K562 (cell line): ENCODE measurements at regions of chr19 and their contacts with region 1.

Region 1: GRCh38 chr19:49502866-49503581 is 6.8 kb downstream of the RPS11 start:
- DNase-seq: peak in 3 of 4 experiments; percentile 24 to 81 (median 56)
- ATAC-seq: peak; percentile 73
- H3K4me3 ChIP-seq: no peak overlapping the region
- H3K27ac ChIP-seq: no peak overlapping the region
- H3K4me1 ChIP-seq: peaks cover 29 to 36% of the 10 kb centered on the region in 2 experiments; a peak in 4 of 5 replicates
- H3K27me3 ChIP-seq: no peaks in the 10 kb centered on the region
- CTCF ChIP-seq: peak; percentile 70 to 73 (median 71)
- EP300 ChIP-seq: no peak
- POLR2A ChIP-seq: no peak
- RAD21 ChIP-seq: peak; percentile 77 to 83

Region 2: GRCh38 chr19:49473868-49474544 is 29.0 kb before region 1 on chr19 and contains the start of gene FLT3LG:
- CTCF ChIA-PET with region 1: interaction called, 3 read pairs
- POLR2A ChIA-PET with region 1: no interaction called
- in situ Hi-C with region 1: no loop called
- intact Hi-C with region 1: loop called (anchors 1 kb)
- DNase-seq: peak; percentile 87 to 91 (median 88)
- ATAC-seq: peak; percentile 76
- H3K4me3 ChIP-seq: peak within 1 kb of the TSS; percentile 56
- H3K27ac ChIP-seq: peak within 1 kb of the TSS; percentile 29; the same call in 2 of the 3 replicates
- H3K4me1 ChIP-seq: peaks cover 14 to 52% of the 10 kb centered on the region in 2 experiments
- H3K27me3 ChIP-seq: no peaks in the 10 kb centered on the region
- CTCF ChIP-seq: peak; percentile 94 to 97 (median 96)
- EP300 ChIP-seq: no peak
- POLR2A ChIP-seq: no peak; the same call in 1 of the 2 replicates
- RAD21 ChIP-seq: peak; percentile 62 to 71
- polyA plus RNA-seq, gene FLT3LG: 0.31 to 0.49 TPM

Region 3: GRCh38 chr19:49492573-49493405 is 10.2 kb before region 1 on chr19:
- CTCF ChIA-PET with region 1: no interaction called
- POLR2A ChIA-PET with region 1: no interaction called
- in situ Hi-C with region 1: no loop called
- intact Hi-C with region 1: no loop called
- DNase-seq: peak in 3 of 4 experiments; percentile 4 to 73 (median 26)
- ATAC-seq: peak; percentile 21
- H3K4me3 ChIP-seq: no peak overlapping the region
- H3K27ac ChIP-seq: peak overlapping the region; percentile 42
- H3K4me1 ChIP-seq: peaks cover 19 to 26% of the 10 kb centered on the region in 2 experiments; a peak in 4 of 5 replicates
- H3K27me3 ChIP-seq: no peaks in the 10 kb centered on the region
- CTCF ChIP-seq: no peak
- EP300 ChIP-seq: no peak
- POLR2A ChIP-seq: peak; percentile 97
- RAD21 ChIP-seq: 0 out of 4 replicates have a peak, but pooled peaks of 1 of the 2 experiments have one; percentile 5

Region 4: DNA sequence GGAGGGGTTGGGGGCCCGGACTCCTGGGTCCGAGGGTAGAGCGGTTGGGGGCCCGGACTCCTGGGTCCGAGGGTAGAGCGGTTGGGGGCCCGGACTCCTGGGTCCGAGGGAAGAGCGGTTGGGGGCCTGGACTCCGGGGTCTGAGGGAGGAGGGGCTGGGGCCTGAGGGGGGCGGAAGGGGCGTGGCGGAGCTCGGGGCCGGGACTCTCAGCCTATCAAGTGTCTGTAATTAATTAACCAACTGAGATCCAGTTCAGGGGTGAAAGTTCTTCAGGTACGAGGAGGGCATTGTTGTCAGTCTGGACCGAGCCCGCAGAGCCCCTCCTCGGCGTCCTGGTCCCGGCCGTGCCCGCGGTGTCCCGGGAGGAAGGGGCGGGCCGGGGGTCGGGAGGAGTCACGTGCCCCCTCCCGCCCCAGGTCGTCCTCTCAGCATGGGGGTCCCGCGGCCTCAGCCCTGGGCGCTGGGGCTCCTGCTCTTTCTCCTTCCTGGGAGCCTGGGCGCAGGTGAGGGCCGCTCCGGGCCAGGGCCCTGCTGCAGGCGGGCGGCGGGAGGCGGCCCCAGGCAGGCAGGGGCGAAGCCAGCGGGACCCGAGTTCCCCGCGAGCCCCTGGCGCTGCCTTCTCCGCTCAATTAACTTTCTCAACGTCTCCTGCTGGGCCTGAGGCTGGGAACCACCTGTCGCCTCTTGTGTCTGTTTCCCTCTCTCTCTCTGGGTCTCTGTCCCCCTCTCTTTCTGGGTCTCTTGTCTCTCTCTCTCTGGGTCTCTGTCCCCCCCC is 10.1 kb after region 1 on chr19:
- CTCF ChIA-PET with region 1: no interaction called
- POLR2A ChIA-PET with region 1: no interaction called
- in situ Hi-C with region 1: no loop called
- intact Hi-C with region 1: no loop called
- DNase-seq: peak in 2 of 4 experiments; percentile 72 to 77
- ATAC-seq: peak; percentile 62
- H3K4me3 ChIP-seq: peak overlapping the region; percentile 31
- H3K27ac ChIP-seq: no peak overlapping the region; the same call in 2 of the 3 replicates
- H3K4me1 ChIP-seq: peaks cover 7 to 35% of the 10 kb centered on the region in 2 experiments; a peak in 4 of 5 replicates
- H3K27me3 ChIP-seq: no peaks in the 10 kb centered on the region
- CTCF ChIP-seq: no peak
- EP300 ChIP-seq: no peak
- POLR2A ChIP-seq: no peak
- RAD21 ChIP-seq: no peak

Region 5: DNA sequence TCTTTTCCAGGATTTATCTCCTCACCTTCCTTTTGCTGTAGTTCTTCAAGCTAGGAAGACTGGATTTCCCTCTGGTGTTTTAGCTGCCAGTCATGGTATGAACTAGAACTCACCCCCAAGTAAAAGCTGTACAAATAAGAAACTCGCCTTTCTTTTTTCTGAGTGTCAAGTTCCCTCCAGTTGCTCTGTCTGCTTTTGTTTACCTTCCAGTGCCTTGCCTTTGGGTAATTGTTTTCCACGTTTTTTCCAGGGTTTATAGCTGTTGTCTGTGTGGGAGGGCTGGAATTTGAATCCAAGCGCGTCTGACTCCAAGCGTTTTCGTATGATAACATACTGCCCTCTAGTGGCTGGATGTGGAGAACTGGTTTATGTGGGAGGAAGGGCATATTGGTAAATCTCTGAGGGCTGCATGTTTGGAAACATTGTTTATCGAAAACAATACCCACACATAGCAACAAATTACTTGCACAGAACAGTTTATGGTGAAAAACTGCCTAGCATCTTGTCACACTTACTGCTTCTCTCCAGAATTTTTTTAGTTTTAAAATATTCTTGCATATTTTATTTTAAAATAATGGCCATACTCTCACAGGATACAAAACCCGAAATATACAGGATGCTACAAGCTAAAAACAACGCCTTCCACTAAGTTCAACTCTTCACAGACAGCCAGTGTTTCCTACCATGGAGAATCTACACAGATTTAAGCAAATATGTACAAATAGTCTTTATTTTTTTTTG is 44.0 kb after region 1 on chr19:
- CTCF ChIA-PET with region 1: interaction called, 16 read pairs
- POLR2A ChIA-PET with region 1: interaction called, 3 read pairs
- in situ Hi-C with region 1: loop called (anchors 5 kb)
- intact Hi-C with region 1: loop called (anchors 1 kb)
- DNase-seq: peak; percentile 74 to 89 (median 76)
- ATAC-seq: peak; percentile 88
- H3K4me3 ChIP-seq: no peak overlapping the region
- H3K27ac ChIP-seq: no peak overlapping the region
- H3K4me1 ChIP-seq: peaks cover 2 to 22% of the 10 kb centered on the region in 2 experiments; a peak in 3 of 5 replicates
- H3K27me3 ChIP-seq: no peaks in the 10 kb centered on the region
- CTCF ChIP-seq: peak; percentile 84 to 91 (median 85)
- EP300 ChIP-seq: no peak
- POLR2A ChIP-seq: no peak
- RAD21 ChIP-seq: peak; percentile 87 to 90

Region 6: GRCh38 chr19:49570138-49570856 is 67.3 kb after region 1 on chr19:
- CTCF ChIA-PET with region 1: no interaction called
- POLR2A ChIA-PET with region 1: interaction called, 7 read pairs
- in situ Hi-C with region 1: loop called (anchors 5 kb)
- intact Hi-C with region 1: loop called (anchors 1 kb)
- DNase-seq: peak; percentile 81 to 93 (median 82)
- ATAC-seq: peak; percentile 89
- H3K4me3 ChIP-seq: no peak overlapping the region
- H3K27ac ChIP-seq: peak overlapping the region; percentile 53
- H3K4me1 ChIP-seq: peaks cover 17 to 21% of the 10 kb centered on the region in 2 experiments
- H3K27me3 ChIP-seq: no peaks in the 10 kb centered on the region
- CTCF ChIP-seq: peak; percentile 98 to 100 (median 99)
- EP300 ChIP-seq: no peak
- POLR2A ChIP-seq: no peak
- RAD21 ChIP-seq: peak; percentile 89 to 90

Region 7: GRCh38 chr19:49712397-49712859 is 209.4 kb after region 1 on chr19:
- CTCF ChIA-PET with region 1: no interaction called
- POLR2A ChIA-PET with region 1: no interaction called
- in situ Hi-C with region 1: no loop called
- intact Hi-C with region 1: no loop called
- DNase-seq: peak; percentile 95 to 97 (median 96)
- ATAC-seq: peak; percentile 91
- H3K4me3 ChIP-seq: peak overlapping the region; percentile 34
- H3K27ac ChIP-seq: peak overlapping the region; percentile 50; the same call in 2 of the 3 replicates
- H3K4me1 ChIP-seq: peaks cover 19 to 33% of the 10 kb centered on the region in 2 experiments; a peak in 4 of 5 replicates
- H3K27me3 ChIP-seq: no peaks in the 10 kb centered on the region
- CTCF ChIP-seq: no peak
- EP300 ChIP-seq: peak; percentile 7; the same call in 1 of the 2 replicates
- POLR2A ChIP-seq: peak; percentile 39
- RAD21 ChIP-seq: no peak